Psoas muscle (tissue), 8 donors: ENCODE measurements at regions of chr2 and their contacts with region 1.

Region 1: GRCh38 chr2:200065477-200065876 is 110.1 kb downstream of the MAIP1 start:
- DNase-seq: no peak
- ATAC-seq: peak in 2 of 4 donors; percentile 45 to 67
- H3K4me3 ChIP-seq: no peak overlapping the region
- H3K27ac ChIP-seq: no peak overlapping the region
- H3K4me1 ChIP-seq: peaks cover 5% of the 10 kb centered on the region
- H3K27me3 ChIP-seq: no peaks in the 10 kb centered on the region
- CTCF ChIP-seq: no peak

Region 2: GRCh38 chr2:200003444-200003843 is 62.0 kb before region 1 on chr2:
- intact Hi-C with region 1: loop called in 1 of 2 experiments (anchors 5 kb)
- DNase-seq: no peak
- ATAC-seq: no peak
- H3K4me3 ChIP-seq: no peak overlapping the region
- H3K27ac ChIP-seq: no peak overlapping the region
- H3K4me1 ChIP-seq: no peaks in the 10 kb centered on the region
- H3K27me3 ChIP-seq: no peaks in the 10 kb centered on the region
- CTCF ChIP-seq: no peak